Naive thymus-derived CD4-positive, alpha-beta T cell (primary cell): ENCODE measurements at regions of chr16 and their contacts with region 1.

Region 1: DNA sequence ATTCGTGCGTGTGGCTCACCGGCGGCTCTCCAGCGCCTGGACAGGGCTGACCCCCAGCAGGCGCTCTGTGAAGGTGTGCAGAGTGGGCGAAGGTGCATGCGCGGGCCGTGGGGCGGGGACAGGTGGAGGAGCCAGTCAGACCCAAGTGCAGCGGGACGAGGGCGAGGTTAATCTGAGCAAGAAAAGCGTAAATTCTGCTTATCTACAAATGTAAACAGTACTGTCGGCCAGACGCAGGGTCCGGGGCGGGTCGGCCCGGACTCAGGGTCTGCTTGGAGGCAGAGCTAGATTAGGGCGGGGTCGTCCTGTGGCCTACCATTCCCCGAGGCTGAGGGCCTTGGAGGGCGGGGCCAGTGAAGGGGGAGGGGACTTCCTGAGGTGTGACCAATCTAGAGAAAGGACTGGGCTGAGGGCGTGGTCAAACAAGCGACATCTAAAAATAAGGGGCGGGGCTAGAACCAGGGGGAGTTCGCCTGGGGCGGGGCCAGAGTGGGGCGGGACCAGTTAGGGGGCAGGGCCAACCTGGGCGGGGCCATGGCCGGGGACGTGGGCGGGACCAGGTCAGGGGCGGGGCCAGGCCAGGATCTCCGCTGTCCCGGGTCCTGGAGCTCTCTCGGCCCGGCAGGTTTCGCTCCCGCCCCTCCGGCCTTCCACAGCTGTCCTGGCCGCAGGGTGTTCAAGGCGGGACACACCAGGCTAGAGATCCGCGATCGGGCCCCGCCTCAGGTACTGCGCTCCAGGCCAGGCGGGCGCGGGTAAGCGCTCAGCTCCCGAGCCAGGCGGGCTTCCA is at the start of gene SEC14L5:
- DNase-seq: peak; percentile 87 to 96 (median 89)
- ATAC-seq: peak; percentile 99
- H3K4me3 ChIP-seq: peak within 1 kb of the TSS; percentile 59
- H3K4me3 Mint-ChIP-seq: peak within 1 kb of the TSS; percentile 79 to 96 (median 89)
- H3K27ac ChIP-seq: peak within 1 kb of the TSS; percentile 26
- H3K27ac Mint-ChIP-seq: peak within 1 kb of the TSS in 6 of 9 donors; percentile 30 to 80 (median 53)
- H3K4me1 ChIP-seq: peaks cover 6 to 13% of the 10 kb centered on the region in 2 donors
- H3K4me1 Mint-ChIP-seq: peaks cover 15 to 30% (median 23%) of the 10 kb centered on the region in 7 donors
- H3K27me3 ChIP-seq: peaks cover 0 to 7% of the 10 kb centered on the region in 2 donors
- H3K27me3 Mint-ChIP-seq: peaks cover 10 to 35% (median 31%) of the 10 kb centered on the region in 5 donors
- total RNA-seq, gene SEC14L5: 0.21 to 1.0 TPM in 2 of 5 experiments, not detected in the others

Region 2: GRCh38 chr16:4350787-4351659 is 606.9 kb before region 1 on chr16 and contains the start of gene PAM16:
- CTCF ChIA-PET with region 1: no interaction called
- POLR2A ChIA-PET with region 1: no interaction called
- intact Hi-C with region 1: loop called in 1 of 2 experiments (anchors 2 kb)
- DNase-seq: peak; percentile 95 to 99 (median 98)
- ATAC-seq: peak; percentile 93
- H3K4me3 ChIP-seq: peak within 1 kb of the TSS; percentile 91
- H3K4me3 Mint-ChIP-seq: peak within 1 kb of the TSS; percentile 90 to 98 (median 94)
- H3K27ac ChIP-seq: peak within 1 kb of the TSS; percentile 87
- H3K27ac Mint-ChIP-seq: peak within 1 kb of the TSS; percentile 76 to 95 (median 92)
- H3K4me1 ChIP-seq: peaks cover 5 to 7% of the 10 kb centered on the region in 2 donors
- H3K4me1 Mint-ChIP-seq: peaks cover 11 to 38% (median 32%) of the 10 kb centered on the region in 7 donors
- H3K27me3 ChIP-seq: no peaks in the 10 kb centered on the region
- H3K27me3 Mint-ChIP-seq: no peaks in the 10 kb centered on the region
- total RNA-seq, gene PAM16: 34.1 to 46.2 (median 45.0) TPM

Region 3: GRCh38 chr16:4511441-4512082 is 446.4 kb before region 1 on chr16:
- CTCF ChIA-PET with region 1: no interaction called
- POLR2A ChIA-PET with region 1: no interaction called
- intact Hi-C with region 1: loop called in 1 of 2 experiments (anchors 10 kb)
- DNase-seq: no peak
- ATAC-seq: peak; percentile 29
- H3K4me3 ChIP-seq: no peak overlapping the region
- H3K4me3 Mint-ChIP-seq: no peak overlapping the region
- H3K27ac ChIP-seq: no peak overlapping the region
- H3K27ac Mint-ChIP-seq: peak overlapping the region; percentile 43 to 90 (median 72)
- H3K4me1 ChIP-seq: peaks cover 34 to 35% of the 10 kb centered on the region in 2 donors
- H3K4me1 Mint-ChIP-seq: peaks cover 34 to 72% (median 52%) of the 10 kb centered on the region in 7 donors
- H3K27me3 ChIP-seq: no peaks in the 10 kb centered on the region
- H3K27me3 Mint-ChIP-seq: no peaks in the 10 kb centered on the region

Region 4: GRCh38 chr16:4624015-4624826 is 333.7 kb before region 1 on chr16 and contains the start of gene MGRN1:
- CTCF ChIA-PET with region 1: no interaction called
- POLR2A ChIA-PET with region 1: no interaction called
- intact Hi-C with region 1: loop called in 1 of 2 experiments (anchors 1 kb)
- DNase-seq: peak; percentile 85 to 94 (median 90)
- ATAC-seq: peak; percentile 93
- H3K4me3 ChIP-seq: peak within 1 kb of the TSS; percentile 72
- H3K4me3 Mint-ChIP-seq: peak within 1 kb of the TSS; percentile 91 to 99 (median 94)
- H3K27ac ChIP-seq: peak within 1 kb of the TSS; percentile 83
- H3K27ac Mint-ChIP-seq: peak within 1 kb of the TSS; percentile 95 to 98 (median 97)
- H3K4me1 ChIP-seq: peaks cover 18 to 21% of the 10 kb centered on the region in 2 donors
- H3K4me1 Mint-ChIP-seq: peaks cover 25 to 43% (median 38%) of the 10 kb centered on the region in 7 donors
- H3K27me3 ChIP-seq: no peaks in the 10 kb centered on the region
- H3K27me3 Mint-ChIP-seq: no peaks in the 10 kb centered on the region
- total RNA-seq, gene MGRN1: 62.6 to 103 (median 81.2) TPM

Region 5: GRCh38 chr16:4802659-4803287 is 155.1 kb before region 1 on chr16:
- CTCF ChIA-PET with region 1: interaction called, 3 read pairs
- POLR2A ChIA-PET with region 1: no interaction called
- intact Hi-C with region 1: loop called (anchors 1 to 2 kb)
- DNase-seq: peak; percentile 82 to 97 (median 93)
- ATAC-seq: peak; percentile 93
- H3K4me3 ChIP-seq: peak overlapping the region; percentile 79
- H3K4me3 Mint-ChIP-seq: peak overlapping the region; percentile 81 to 86 (median 86)
- H3K27ac ChIP-seq: peak overlapping the region; percentile 60
- H3K27ac Mint-ChIP-seq: peak overlapping the region in 8 of 9 donors; percentile 36 to 84 (median 74)
- H3K4me1 ChIP-seq: peaks cover 10 to 18% of the 10 kb centered on the region in 2 donors
- H3K4me1 Mint-ChIP-seq: peaks cover 7 to 19% (median 12%) of the 10 kb centered on the region in 7 donors
- H3K27me3 ChIP-seq: no peaks in the 10 kb centered on the region
- H3K27me3 Mint-ChIP-seq: no peaks in the 10 kb centered on the region